Calu3 (cell line): ENCODE measurements at regions of chr14 and their contacts with region 1.

Region 1: DNA sequence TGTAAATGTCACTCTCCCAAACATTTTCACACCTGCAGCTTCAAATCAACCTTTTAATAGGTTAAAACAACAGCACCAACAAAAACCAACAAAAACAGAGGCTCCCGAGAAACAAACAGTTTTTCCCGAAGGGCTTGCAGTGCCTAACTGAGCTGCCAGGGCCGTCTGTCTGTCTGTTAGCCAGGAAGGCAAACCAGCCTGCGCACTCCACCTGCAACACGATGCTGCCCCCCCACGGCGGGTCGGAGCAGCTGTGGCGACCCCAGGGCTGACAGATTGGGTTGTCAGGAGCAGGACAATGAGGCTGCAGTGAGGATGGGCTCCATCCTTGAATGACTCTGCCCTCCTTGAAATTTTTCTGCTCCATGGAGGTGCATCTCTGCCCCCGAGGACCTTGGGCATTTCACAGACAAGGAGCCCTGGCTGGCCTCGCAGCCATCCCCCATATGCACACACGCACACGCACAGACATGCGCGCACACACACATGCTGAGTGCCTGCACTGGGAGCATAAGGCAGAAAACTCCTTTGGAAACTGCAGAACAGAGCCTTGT is 2.6 kb downstream of the RTL1 start:
- DNase-seq: peak; percentile 68
- H3K4me3 Mint-ChIP-seq: peak overlapping the region; percentile 37
- H3K27ac Mint-ChIP-seq: peak overlapping the region; percentile 17
- H3K4me1 Mint-ChIP-seq: peaks cover 48% of the 10 kb centered on the region
- H3K27me3 Mint-ChIP-seq: no peaks in the 10 kb centered on the region
- CTCF ChIP-seq: no peak

Region 2: GRCh38 chr14:100815478-100816285 is 85.2 kb before region 1 on chr14:
- CTCF ChIA-PET with region 1: interaction called, 12 read pairs
- intact Hi-C with region 1: no loop called
- DNase-seq: no peak
- H3K4me3 Mint-ChIP-seq: no peak overlapping the region
- H3K27ac Mint-ChIP-seq: no peak overlapping the region
- H3K4me1 Mint-ChIP-seq: no peaks in the 10 kb centered on the region
- H3K27me3 Mint-ChIP-seq: peaks cover 15% of the 10 kb centered on the region
- CTCF ChIP-seq: no peak

Region 3: DNA sequence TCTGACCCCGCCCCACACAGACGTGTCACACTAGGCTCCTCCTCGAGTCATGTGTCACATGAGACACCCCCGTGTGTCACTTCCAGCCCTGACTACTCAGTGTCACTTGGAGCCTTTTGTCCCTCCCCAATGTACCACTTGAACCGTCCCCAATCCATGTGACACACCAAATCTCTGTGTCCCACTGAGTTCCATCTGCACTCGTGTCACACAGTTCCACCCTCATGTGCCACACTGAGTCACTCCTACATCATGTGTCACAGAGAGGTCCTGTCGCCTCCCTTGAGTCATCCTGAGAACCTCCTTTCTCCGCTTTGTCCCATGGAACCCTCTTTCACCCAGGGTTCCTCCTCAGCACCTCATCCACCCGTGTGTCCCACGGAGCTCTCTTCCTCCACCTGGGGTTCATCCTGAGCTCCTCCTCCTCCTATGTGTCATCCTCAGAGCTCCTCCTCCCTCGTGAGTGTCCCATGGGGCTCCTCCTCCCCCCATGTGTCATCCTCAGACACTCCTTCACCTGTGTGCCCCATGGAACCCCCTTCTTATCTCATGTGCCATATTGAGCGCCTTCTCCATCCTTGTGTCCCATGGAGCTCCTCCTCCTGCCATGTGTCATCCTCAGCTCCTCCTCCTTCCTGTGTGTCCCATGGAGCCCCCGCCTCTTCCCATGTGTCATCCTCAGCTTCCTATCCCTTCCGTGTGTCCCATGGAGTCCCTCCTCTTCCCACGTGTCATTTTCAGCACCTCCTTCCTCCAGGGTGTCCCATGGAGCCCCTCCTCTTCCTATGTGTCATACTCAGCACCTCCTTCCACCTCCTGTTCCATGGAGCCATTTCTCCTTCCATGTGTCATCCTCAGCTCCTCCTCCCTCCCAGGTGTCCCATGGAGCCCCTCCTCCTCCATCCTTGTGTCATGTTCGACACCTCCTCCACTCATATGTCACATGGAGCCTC is 29.4 kb before region 1 on chr14:
- CTCF ChIA-PET with region 1: no interaction called
- intact Hi-C with region 1: no loop called
- DNase-seq: no peak
- H3K4me3 Mint-ChIP-seq: no peak overlapping the region
- H3K27ac Mint-ChIP-seq: no peak overlapping the region
- H3K4me1 Mint-ChIP-seq: peaks cover 17% of the 10 kb centered on the region
- H3K27me3 Mint-ChIP-seq: no peaks in the 10 kb centered on the region
- CTCF ChIP-seq: no peak

Region 4: DNA sequence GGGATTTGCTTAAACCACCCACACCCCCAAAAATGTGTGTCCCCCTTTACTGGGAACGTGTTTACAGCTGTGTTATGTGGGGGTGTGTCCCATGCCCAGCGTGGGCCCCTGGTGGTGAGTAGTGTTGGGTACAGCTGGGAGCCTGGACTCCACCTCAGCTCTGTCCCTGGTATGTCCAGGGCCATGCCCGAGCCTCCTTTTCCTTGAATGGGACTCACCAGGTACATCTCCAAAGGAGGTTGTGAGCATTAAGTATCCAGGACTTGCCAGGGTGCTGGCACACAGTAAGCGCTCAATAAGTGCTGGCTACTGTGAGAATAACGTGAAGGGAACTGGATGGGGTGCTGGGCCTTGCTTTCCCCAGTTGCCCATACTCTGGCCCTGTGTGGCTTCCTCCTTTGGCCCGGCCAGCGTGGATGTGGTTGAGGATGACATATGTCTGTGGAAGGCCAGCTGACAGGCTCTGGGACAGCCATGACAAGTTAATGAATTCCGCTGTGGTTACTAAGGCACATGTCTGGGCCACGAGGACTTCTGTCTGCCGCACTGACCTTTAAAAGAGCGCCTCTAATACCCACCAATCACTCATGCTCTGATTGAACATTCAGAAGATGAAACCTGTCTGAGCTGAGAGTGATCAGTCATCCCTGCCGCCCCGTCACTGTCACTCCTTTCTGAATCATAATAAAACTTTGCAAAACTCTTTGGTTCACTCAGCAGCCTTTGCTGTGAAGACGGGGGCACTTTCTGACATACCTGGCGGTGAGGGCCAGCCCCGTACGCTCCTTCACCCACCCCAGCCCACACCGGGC is 735.0 kb after region 1 on chr14:
- CTCF ChIA-PET with region 1: no interaction called
- intact Hi-C with region 1: loop called (anchors 10 kb)
- DNase-seq: no peak
- H3K4me3 Mint-ChIP-seq: no peak overlapping the region
- H3K27ac Mint-ChIP-seq: no peak overlapping the region
- H3K4me1 Mint-ChIP-seq: no peaks in the 10 kb centered on the region
- H3K27me3 Mint-ChIP-seq: peaks cover 22% of the 10 kb centered on the region
- CTCF ChIP-seq: no peak